HEK293 (cell line): ENCODE measurements at regions of chr7 and their contacts with region 1.

Region 1: GRCh38 chr7:65037740-65038678 is 31.5 kb upstream of the ERV3-1 start:
- H3K4me3 ChIP-seq: peak overlapping the region; percentile 84
- H3K27ac ChIP-seq: peak overlapping the region; percentile 73
- H3K4me1 ChIP-seq: no peaks in the 10 kb centered on the region
- CTCF ChIP-seq: no peak

Region 2: DNA sequence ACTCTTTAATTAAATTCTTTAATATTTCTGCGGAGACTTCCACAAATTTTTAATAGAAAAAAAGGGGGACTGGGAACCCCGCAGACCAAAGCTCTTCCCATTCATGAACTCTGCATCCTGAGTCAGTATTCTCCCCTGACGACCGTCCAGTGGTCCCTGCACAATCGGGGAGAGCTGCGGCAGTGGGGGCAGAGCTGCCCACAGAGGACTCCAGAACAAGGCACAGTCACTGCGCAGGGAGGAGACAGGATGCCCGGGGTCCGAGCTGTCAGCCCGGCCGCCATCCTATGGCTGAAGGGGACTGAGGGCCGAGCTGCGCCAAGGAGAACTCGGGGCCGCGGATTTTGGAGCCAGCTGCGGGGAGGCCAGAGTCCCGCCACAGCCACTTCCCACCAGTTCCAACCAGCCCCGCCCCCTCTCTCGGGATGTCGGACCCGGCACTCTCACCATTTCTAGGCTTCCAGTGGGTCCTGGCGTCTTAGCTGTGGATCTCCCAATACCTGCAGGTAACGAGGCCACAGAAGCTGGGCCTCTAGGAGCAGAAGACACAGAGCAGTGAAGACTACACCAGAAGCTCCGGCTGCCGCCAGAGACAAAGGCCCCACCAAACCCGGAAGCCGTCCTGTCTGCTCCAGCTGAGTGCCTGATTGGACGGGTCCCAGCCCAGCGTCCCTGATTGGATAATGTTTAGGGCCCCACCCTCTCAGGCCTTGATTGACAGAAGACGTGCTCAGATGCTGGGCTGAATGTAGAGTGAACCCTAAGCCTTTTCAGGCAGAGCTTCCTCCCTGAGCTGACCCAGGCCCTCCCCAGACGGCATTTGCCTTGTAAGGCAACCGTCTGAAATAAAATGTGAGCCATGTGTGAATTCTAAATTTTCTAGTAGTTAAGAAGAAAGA is 31.7 kb before region 1 on chr7 and contains the start of gene ERV3-1:
- CTCF ChIA-PET with region 1: no interaction called
- POLR2A ChIA-PET with region 1: interaction called, 34 read pairs
- H3K4me3 ChIP-seq: peak within 1 kb of the TSS; percentile 84
- H3K27ac ChIP-seq: peak within 1 kb of the TSS; percentile 82
- H3K4me1 ChIP-seq: no peaks in the 10 kb centered on the region
- CTCF ChIP-seq: no peak

Region 3: GRCh38 chr7:65310761-65311160 is 272.8 kb after region 1 on chr7:
- CTCF ChIA-PET with region 1: no interaction called
- POLR2A ChIA-PET with region 1: no interaction called
- H3K4me3 ChIP-seq: no peak overlapping the region
- H3K27ac ChIP-seq: no peak overlapping the region
- H3K4me1 ChIP-seq: no peaks in the 10 kb centered on the region
- CTCF ChIP-seq: no peak